ENCODE measurements at regions of chr14 and their contacts with region 1.

Region 1: GRCh38 chr14:69879175-69880043 is at the start of gene SMOC1:
- DNase-seq: peak; percentile 21 to 96 (median 71)

Region 2: DNA sequence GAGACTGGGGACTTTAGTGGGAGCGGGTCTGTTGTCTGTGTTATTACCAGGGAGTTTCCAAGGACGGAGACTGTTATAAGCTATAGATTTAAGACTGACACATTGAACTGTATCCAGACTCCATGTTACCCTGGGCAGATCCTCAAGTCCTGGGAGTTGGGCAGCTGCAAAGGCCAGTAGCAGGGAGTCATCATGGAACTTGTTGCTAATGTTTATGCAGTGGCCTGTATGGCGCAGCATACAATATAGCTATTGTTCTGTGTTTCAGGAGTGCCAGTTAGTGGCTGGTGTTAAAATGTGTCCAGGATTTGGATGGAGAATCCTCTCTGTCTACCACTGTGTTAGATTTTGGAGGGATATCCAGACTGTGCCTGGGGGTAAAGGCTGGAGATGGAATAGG is 31.5 kb after region 1 on chr14:
- intact Hi-C with region 1: loop called (anchors 5 kb)
- DNase-seq: peak in 3 of 10 donors; percentile 6 to 84 (median 26)

Region 3: DNA sequence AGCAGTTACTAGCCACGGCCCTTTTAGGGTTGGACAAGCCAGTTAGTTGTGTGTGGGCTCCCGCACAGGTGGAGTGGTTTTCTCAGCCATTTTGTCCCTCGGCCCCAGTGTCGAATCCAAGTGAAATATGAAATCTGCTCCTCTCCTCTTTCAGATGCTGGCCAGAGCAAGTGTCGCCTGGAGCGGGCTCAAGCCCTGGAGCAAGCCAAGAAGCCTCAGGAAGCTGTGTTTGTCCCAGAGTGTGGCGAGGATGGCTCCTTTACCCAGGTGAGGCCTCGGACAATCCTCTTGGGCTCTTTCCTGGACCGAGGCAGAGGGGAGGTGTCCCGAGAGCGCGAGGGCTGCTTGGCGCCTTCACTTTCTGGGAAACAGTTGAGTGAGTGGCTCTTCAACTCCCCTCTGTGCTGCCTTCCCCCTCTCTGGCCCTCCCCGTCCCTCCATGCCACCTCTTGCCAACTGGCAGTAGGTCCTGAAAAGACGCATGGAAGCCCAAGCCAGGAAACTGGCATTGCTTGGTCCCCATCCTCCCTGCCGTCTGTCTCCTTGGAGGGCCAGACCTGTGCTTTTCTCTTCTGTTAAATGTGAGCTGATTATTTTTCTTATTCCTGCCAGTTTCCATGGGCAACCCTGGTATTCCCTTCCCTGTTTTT is 74.0 kb after region 1 on chr14:
- intact Hi-C with region 1: loop called (anchors 10 kb)
- DNase-seq: peak in 7 of 10 donors; percentile 27 to 85 (median 40)

Region 4: GRCh38 chr14:70013269-70013873 is 134.0 kb after region 1 on chr14:
- intact Hi-C with region 1: loop called (anchors 5 kb)
- DNase-seq: peak in 3 of 10 donors; percentile 25 to 62 (median 57)

Region 5: DNA sequence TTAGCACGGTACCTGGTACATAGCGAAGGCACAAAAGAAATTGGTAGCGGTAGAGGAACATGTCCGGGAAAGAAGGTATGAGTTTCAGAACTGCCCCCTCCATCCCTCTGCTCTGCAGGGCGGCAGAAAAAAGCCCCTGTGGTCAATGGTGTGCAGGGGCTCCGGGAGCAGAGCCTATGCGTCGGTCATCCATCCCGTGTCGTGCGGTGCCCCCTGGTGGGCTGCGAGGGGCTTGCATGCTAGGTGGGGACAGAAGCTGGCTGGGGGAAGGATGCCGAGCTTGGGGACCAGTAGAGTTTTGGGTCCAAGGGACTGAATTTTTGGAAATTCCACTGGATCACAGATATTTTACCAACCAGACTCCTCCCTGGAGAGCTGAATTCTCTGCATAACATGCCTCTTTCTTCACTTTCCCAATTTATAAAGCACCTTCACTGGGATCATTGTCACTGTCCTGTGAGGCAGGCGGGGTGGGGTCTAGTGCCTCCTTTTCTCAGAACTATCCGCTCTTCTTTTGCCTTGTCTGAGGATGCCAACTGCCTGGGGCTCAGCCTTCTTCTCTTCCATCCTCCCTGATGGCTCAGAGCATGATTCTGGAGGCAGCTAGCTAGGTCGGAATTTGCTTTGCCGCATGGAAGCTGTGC is 148.5 kb after region 1 on chr14:
- intact Hi-C with region 1: loop called (anchors 2 kb)
- DNase-seq: peak; percentile 60 to 96 (median 84)

Measured in posterior cingulate gyrus (tissue), 11 donors.